Pancreas (tissue), 10 donors: ENCODE measurements at regions of chr12 and their contacts with region 1.

Region 1: DNA sequence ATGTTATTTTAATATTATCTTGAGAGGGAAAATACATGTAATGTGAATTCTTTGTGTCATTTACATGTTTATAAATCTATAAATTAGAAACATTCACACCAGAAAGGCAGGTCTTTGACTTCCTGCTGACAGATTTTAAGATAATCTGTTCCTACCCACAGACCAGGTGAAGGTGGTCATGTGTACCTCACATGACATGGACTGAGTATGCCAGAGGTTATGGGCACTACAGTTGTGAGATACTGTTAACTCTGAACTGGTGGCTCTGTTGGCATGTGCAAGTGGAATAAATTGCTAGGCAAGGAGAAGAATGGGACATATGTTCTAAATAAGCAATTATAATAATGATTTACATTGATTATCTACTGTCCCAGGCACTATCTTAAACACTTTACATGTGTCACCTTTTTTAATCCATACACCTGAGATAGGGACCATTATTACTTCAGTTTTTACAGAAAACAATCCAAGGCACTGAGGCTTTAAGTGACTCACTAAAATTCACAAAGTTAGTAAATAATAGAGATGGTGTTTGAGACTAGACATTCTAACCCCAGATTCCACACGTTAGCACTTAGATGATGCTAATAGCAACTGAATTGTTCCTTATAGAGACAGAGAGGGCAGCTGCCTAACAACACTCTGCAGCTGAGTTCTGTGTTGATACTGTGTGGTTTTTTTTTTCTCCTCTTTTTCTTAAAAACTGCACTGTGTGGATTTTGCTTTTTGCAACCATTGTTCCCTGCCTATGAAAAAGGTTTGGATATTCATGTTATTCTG is 23.8 kb downstream of the SLC16A7 start:
- DNase-seq: no peak
- ATAC-seq: peak in 2 of 4 donors; percentile 41 to 44
- H3K4me3 ChIP-seq: no peak overlapping the region
- H3K27ac ChIP-seq: peak overlapping the region in 1 of 4 donors; percentile 33
- H3K4me1 ChIP-seq: peaks cover 3 to 5% (median 4%) of the 10 kb centered on the region in 3 donors
- H3K27me3 ChIP-seq: no peaks in the 10 kb centered on the region
- CTCF ChIP-seq: no peak

Region 2: DNA sequence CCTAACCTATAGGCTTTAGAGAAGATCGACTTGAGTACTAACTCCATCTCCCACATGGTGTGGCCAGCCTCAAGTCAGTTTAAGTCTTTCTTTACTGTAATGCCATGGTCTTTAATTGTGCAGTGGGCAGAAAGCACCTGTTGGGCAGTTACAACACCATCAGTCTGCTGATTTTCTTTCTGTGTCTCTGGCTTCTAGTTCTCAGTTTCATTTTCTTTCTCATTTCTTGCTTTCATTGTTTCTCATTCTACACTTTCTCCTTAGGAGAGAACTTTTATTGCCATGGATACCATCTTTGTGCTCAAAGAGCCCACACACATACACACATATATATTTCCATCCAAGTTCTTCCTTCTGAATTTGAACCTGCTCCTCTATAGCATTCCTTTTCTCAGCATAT is 119.9 kb before region 1 on chr12:
- intact Hi-C with region 1: no loop called
- DNase-seq: no peak
- ATAC-seq: no peak
- H3K4me3 ChIP-seq: no peak overlapping the region
- H3K27ac ChIP-seq: no peak overlapping the region
- H3K4me1 ChIP-seq: no peaks in the 10 kb centered on the region
- H3K27me3 ChIP-seq: no peaks in the 10 kb centered on the region
- CTCF ChIP-seq: no peak

Region 3: DNA sequence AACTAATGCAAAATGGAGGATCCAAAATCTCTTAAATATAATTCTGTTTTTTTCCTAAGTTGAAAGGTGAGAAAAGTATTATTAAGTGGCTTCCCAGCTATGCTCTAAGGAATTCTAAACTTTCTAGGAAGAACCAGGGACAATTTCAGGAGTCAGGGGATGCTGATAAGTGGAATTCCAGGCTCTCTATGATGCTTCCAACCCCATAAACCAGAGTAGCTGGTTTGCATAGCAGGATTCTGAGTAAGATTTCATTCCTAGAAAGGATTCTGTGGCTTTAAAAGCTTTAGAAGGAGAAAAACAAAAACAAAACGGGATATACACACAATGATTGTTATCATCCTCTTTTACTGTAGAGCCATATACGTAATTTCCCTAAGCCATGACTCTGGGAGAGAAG is 70.1 kb after region 1 on chr12:
- intact Hi-C with region 1: loop called in 1 of 3 experiments (anchors 5 kb)
- DNase-seq: no peak
- ATAC-seq: no peak
- H3K4me3 ChIP-seq: no peak overlapping the region
- H3K27ac ChIP-seq: no peak overlapping the region
- H3K4me1 ChIP-seq: no peaks in the 10 kb centered on the region
- H3K27me3 ChIP-seq: no peaks in the 10 kb centered on the region
- CTCF ChIP-seq: no peak